ENCODE measurements at regions of chr15 and their contacts with region 1.

Region 1: GRCh38 chr15:54618120-54618519 is 578.6 kb downstream of the RSL24D1 start:
- DNase-seq: no peak
- ATAC-seq: no peak
- H3K4me3 ChIP-seq: no peak overlapping the region
- H3K4me3 Mint-ChIP-seq: no peak overlapping the region
- H3K27ac ChIP-seq: no peak overlapping the region
- H3K27ac Mint-ChIP-seq: no peak overlapping the region
- H3K4me1 ChIP-seq: no peaks in the 10 kb centered on the region
- H3K4me1 Mint-ChIP-seq: no peaks in the 10 kb centered on the region
- H3K27me3 ChIP-seq: no peaks in the 10 kb centered on the region
- H3K27me3 Mint-ChIP-seq: no peaks in the 10 kb centered on the region
- CTCF ChIP-seq: no peak

Region 2: GRCh38 chr15:54374184-54374952 is 243.8 kb before region 1 on chr15:
- intact Hi-C with region 1: no loop called
- DNase-seq: no peak
- ATAC-seq: no peak
- H3K4me3 ChIP-seq: no peak overlapping the region
- H3K4me3 Mint-ChIP-seq: no peak overlapping the region
- H3K27ac ChIP-seq: no peak overlapping the region
- H3K27ac Mint-ChIP-seq: no peak overlapping the region
- H3K4me1 ChIP-seq: no peaks in the 10 kb centered on the region
- H3K4me1 Mint-ChIP-seq: no peaks in the 10 kb centered on the region
- H3K27me3 ChIP-seq: no peaks in the 10 kb centered on the region
- H3K27me3 Mint-ChIP-seq: no peaks in the 10 kb centered on the region
- CTCF ChIP-seq: no peak

Region 3: GRCh38 chr15:54675241-54675640 is 57.1 kb after region 1 on chr15:
- intact Hi-C with region 1: loop called (anchors 10 kb)
- DNase-seq: no peak
- ATAC-seq: no peak
- H3K4me3 ChIP-seq: no peak overlapping the region
- H3K4me3 Mint-ChIP-seq: no peak overlapping the region
- H3K27ac ChIP-seq: no peak overlapping the region
- H3K27ac Mint-ChIP-seq: no peak overlapping the region
- H3K4me1 ChIP-seq: no peaks in the 10 kb centered on the region
- H3K4me1 Mint-ChIP-seq: no peaks in the 10 kb centered on the region
- H3K27me3 ChIP-seq: no peaks in the 10 kb centered on the region
- H3K27me3 Mint-ChIP-seq: no peaks in the 10 kb centered on the region
- CTCF ChIP-seq: no peak

Measured in natural killer cell (primary cell).